ENCODE measurements at regions of chr17 and their contacts with region 1.

Region 1: DNA sequence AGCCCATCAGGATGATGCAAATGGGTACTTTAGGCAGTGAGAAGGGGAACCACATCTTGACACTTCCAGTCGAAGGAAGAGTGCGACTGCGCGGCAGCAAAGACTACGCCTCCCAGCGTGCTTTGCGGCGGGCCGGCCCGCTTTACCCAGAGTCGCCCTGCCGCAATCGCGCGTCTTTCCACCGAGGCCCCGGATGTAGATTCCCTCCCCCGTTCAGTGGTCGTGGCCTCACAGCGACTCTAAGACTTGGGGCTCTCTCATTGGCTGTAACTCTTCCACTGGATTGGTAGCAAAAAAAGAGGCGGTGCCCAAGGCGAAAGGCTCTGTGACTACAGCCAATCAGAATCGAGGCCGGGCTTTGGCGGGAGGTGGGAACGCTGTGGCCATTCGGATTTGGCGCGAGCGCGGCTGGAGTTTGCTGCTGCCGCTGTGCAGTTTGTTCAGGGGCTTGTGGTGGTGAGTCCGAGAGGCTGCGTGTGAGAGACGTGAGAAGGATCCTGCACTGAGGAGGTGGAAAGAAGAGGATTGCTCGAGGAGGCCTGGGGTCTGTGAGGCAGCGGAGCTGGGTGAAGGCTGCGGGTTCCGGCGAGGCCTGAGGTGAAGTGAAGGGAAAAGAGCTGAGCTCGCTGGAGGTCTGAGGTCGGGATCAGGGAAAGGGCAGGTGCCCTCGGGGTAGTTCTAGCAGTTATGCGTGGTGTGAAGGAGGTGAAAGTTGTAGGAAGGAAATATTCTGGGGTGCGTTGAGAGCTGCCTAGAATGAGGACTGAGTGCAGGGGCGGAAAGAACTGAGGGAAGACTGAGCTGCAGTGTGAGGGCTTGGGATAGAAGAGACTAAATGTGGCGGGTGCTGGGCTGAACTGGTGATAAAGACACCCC is at the start of gene CDC6:
- DNase-seq: peak; percentile 99
- H3K4me3 ChIP-seq: peak within 1 kb of the TSS; percentile 35 to 62 (median 50)
- H3K27ac ChIP-seq: peak within 1 kb of the TSS; percentile 44 to 60 (median 57)
- H3K4me1 ChIP-seq: peaks cover 5 to 45% (median 25%) of the 10 kb centered on the region in 4 donors
- H3K27me3 ChIP-seq: no peaks in the 10 kb centered on the region
- CTCF ChIP-seq: no peak
- EP300 ChIP-seq: no peak
- POLR2A ChIP-seq: peak; percentile 42
- total RNA-seq, gene CDC6: 1.6 to 3.2 (median 2.4) TPM in 3 of 4 donors, not detected in the other

Region 2: GRCh38 chr17:40021451-40021971 is 266.2 kb before region 1 on chr17:
- in situ Hi-C with region 1: loop called in 2 of 4 experiments (anchors 25 kb)
- intact Hi-C with region 1: no loop called
- DNase-seq: no peak
- H3K4me3 ChIP-seq: no peak overlapping the region
- H3K27ac ChIP-seq: peak overlapping the region in 3 of 4 donors; percentile 38 to 80 (median 67)
- H3K4me1 ChIP-seq: peaks cover 12 to 61% (median 52%) of the 10 kb centered on the region in 4 donors
- H3K27me3 ChIP-seq: no peaks in the 10 kb centered on the region
- CTCF ChIP-seq: no peak
- EP300 ChIP-seq: no peak
- POLR2A ChIP-seq: no peak

Region 3: DNA sequence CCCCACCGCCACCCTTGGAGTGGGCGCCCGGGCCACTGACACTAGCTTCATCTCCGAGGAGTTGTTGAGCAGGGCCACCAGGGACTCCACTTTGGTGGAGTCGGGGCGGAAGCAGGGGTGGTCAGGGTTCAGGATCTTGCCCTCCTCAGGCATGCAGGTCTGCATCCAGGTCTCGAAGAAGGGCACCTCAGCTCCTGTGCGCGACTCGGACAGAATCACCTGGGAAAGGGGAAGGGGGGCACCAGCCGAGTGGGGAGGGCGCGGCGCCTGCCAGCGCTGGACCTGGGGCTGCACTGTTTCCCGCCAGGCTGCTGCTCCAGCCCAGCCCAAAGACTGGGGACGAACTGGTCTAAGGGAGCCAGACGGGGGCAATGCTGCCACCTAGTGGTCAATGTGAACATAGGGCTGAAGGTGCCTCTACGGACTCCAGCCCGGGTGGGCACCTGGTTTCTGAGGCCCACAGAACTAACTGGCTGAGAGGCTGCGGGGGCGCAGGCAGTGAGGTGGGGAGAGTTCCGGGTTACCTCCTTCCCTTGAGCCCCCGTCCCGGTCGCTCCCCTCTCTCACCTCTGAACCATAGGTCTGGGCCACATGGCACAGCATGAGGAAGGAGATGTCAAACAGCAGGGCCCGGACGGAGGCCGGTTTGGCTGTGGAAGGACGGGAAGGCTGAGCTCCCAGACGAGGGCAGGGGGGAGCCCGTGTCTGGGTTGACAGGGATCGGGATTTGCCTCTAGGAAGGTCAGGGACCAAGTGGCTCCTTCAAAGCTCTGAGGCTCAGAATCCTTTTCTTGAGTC is 260.7 kb before region 1 on chr17:
- in situ Hi-C with region 1: loop called in 2 of 4 experiments (anchors 25 kb)
- intact Hi-C with region 1: no loop called
- DNase-seq: peak; percentile 88
- H3K4me3 ChIP-seq: no peak overlapping the region
- H3K27ac ChIP-seq: peak overlapping the region in 1 of 4 donors; percentile 80
- H3K4me1 ChIP-seq: peaks cover 10 to 51% (median 49%) of the 10 kb centered on the region in 4 donors
- H3K27me3 ChIP-seq: no peaks in the 10 kb centered on the region
- CTCF ChIP-seq: peak; percentile 92 to 96 (median 94)
- EP300 ChIP-seq: no peak
- POLR2A ChIP-seq: no peak

Region 4: DNA sequence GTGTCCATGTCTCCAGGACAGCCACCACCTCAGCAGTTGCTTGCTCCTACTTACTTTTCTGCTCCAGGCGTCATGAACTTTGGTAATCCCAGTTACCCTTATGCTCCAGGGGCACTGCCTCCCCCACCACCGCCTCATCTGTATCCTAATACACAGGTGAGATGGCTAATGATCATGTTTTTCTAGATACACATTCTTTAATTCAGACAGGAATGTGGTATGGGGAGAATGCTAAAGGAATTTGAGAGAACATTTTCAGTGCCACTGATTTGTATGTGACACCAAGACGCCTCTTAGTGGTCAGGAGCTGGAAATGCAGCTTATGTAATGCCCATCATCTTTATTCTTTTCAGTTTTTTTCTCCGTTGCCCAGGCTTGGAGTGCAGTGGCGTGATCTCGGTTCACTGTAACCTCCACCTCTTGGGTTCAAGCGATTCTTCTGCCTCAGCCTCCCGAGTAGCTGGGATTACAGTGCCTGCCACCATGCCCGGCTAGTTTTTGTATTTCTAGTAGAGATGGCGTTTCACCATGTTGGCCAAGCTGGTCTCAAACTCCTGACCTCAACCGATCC is 119.4 kb before region 1 on chr17:
- in situ Hi-C with region 1: no loop called
- intact Hi-C with region 1: no loop called
- DNase-seq: no peak
- H3K4me3 ChIP-seq: no peak overlapping the region
- H3K27ac ChIP-seq: peak overlapping the region; percentile 50 to 66 (median 56)
- H3K4me1 ChIP-seq: peaks cover 0 to 7% (median 3%) of the 10 kb centered on the region in 4 donors
- H3K27me3 ChIP-seq: no peaks in the 10 kb centered on the region
- CTCF ChIP-seq: peak; percentile 77 to 92 (median 80)
- EP300 ChIP-seq: no peak
- POLR2A ChIP-seq: no peak

Region 5: DNA sequence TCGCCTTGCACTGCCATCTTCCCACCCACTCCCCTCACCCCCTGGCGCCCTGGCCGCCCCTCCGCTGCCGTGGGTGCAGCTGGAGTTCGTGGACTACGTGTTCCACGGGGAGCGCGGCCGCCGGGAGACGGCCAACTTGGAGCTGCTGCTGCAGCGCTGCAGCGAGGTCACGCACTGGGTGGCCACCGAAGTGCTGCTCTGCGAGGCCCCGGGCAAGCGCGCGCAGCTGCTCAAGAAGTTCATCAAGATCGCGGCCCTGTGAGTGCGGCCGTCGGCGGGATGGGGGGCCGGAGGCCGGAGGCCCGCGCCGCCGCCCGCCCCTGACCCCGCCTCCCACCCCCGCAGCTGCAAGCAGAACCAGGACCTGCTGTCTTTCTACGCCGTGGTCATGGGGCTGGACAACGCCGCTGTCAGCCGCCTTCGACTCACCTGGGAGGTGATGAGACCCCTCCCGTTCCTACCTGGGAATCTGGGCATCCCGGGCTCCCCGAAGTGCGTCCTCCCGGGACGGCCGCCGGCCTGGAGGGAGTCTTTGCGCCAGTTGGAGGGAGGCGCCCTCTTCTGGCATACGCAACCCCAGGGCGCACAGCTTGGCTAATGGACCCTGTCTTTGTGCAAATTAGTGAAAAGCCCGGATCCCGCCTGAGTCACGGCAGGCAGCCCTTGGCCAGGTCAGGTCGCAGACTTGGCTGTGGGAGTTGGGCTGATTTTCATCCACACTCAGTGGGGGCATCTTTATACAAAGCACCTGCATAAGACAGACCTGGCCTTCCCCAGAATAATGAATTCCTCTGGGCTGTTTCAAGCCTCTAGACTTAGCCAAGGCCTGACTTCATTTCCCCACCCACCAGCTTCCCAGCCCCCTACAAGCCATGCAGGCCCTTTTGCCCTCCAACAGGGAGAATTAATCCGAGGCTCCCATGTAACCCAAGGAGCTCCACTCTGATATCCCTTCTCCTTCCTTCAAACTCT is 96.2 kb before region 1 on chr17:
- in situ Hi-C with region 1: loop called in 2 of 4 experiments (anchors 10 to 25 kb)
- intact Hi-C with region 1: no loop called
- DNase-seq: peak; percentile 77
- H3K4me3 ChIP-seq: peak overlapping the region; percentile 31 to 57 (median 38)
- H3K27ac ChIP-seq: peak overlapping the region; percentile 20 to 74 (median 44)
- H3K4me1 ChIP-seq: peaks cover 0 to 13% (median 7%) of the 10 kb centered on the region in 4 donors
- H3K27me3 ChIP-seq: no peaks in the 10 kb centered on the region
- CTCF ChIP-seq: peak in 4 of 5 experiments; percentile 31 to 52 (median 40)
- EP300 ChIP-seq: no peak
- POLR2A ChIP-seq: no peak

Region 6: DNA sequence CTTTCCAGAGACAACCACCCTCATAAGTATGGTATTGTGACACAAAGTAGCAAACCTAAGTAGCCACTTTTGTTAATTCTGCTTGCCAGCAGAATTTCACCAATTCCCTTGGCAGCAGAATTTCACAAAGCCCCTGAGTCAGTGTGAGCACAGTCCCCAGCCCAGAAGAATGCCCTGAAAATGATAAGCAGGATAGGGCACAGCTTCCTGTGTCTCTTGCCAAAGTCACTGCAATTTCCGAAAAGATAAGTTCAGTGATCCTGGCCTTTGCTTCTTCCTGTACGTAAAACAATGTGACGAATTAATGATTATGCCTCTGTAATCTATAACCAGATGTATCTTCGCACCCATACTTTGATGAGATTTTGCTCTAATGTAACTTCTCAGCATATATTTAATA is 84.6 kb before region 1 on chr17:
- in situ Hi-C with region 1: loop called (anchors 5 to 25 kb)
- intact Hi-C with region 1: no loop called
- DNase-seq: no peak
- H3K4me3 ChIP-seq: no peak overlapping the region
- H3K27ac ChIP-seq: no peak overlapping the region
- H3K4me1 ChIP-seq: peaks cover 0 to 23% (median 5%) of the 10 kb centered on the region in 4 donors
- H3K27me3 ChIP-seq: no peaks in the 10 kb centered on the region
- CTCF ChIP-seq: no peak
- EP300 ChIP-seq: no peak
- POLR2A ChIP-seq: no peak

Region 7: DNA sequence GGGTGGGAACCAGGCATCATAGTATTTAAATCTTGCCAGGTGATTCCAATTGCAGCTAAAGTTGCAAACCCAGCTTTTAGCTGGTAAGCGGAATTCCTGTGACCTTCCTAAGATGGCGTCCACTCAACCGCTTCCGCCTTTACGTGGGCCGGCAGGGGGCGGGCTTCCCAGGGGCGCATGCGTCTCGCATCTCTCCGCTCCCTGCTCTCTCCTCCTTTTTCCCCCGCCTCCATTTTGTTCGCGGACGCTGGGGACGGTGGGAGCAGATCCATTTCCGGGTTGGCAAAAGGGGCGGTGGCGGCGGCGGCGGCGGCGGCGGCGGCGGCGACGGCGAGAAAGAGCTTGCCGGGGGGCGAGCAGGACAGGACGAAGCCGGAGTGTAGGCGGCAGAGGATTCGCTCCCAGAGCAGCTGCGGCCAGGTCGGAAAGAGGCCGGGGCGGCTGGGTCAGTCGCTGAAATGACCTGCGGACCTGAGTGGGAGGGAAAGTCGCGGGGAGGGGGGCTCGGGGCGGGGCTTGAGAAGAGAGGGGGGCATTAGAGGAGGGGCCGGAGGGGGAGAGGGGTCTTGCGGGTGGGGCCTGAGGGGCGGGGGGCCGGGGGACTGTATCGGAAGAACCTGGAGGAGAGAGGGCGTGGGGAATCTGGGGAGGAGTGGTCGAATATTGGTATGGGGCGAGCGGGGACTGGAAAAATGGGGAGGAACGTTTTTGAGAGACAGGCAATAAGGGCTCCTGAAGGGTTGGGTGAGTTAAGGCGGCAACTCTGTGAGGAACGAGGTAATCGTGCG is 68.5 kb before region 1 on chr17 and contains the start of gene WIPF2:
- in situ Hi-C with region 1: no loop called
- intact Hi-C with region 1: loop called (anchors 5 kb)
- DNase-seq: peak; percentile 99
- H3K4me3 ChIP-seq: peak within 1 kb of the TSS; percentile 66 to 91 (median 84)
- H3K27ac ChIP-seq: peak within 1 kb of the TSS; percentile 89 to 96 (median 92)
- H3K4me1 ChIP-seq: peaks cover 5 to 14% (median 11%) of the 10 kb centered on the region in 4 donors
- H3K27me3 ChIP-seq: no peaks in the 10 kb centered on the region
- CTCF ChIP-seq: peak; percentile 76 to 92 (median 87)
- EP300 ChIP-seq: no peak
- POLR2A ChIP-seq: peak; percentile 85
- total RNA-seq, gene WIPF2: 20.5 to 29.5 (median 25.3) TPM

Region 8: GRCh38 chr17:40264458-40265185 is 23.1 kb before region 1 on chr17:
- in situ Hi-C with region 1: no loop called
- intact Hi-C with region 1: no loop called
- DNase-seq: no peak
- H3K4me3 ChIP-seq: no peak overlapping the region
- H3K27ac ChIP-seq: no peak overlapping the region
- H3K4me1 ChIP-seq: no peaks in the 10 kb centered on the region
- H3K27me3 ChIP-seq: no peaks in the 10 kb centered on the region
- CTCF ChIP-seq: no peak
- EP300 ChIP-seq: no peak
- POLR2A ChIP-seq: no peak

Region 9: DNA sequence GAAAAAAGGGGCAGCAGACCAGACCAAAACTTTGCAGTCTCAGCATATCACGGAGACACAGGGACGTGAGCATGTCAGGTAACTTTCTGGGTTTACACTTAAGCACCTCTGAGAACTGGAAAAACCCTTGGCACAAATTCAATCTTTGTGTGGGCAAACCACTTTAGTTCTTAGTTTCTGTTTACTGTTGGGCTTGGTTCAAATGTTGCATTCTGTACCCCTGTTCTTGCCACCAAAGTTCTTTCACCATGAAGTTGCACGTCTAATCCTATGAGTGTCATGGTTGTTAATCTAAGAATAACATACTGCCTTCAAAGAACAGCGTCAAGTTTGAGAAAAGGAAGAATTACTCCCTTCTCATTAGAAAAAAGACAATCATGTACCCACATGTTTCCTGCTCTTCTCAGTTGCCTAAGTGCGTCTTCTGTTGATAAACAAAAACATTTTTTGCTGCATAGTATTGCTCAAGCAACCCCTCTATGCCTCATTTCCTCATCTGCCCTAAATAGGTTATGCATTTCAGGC is 1051.3 kb after region 1 on chr17:
- in situ Hi-C with region 1: no loop called
- intact Hi-C with region 1: no loop called
- DNase-seq: no peak
- H3K4me3 ChIP-seq: no peak overlapping the region
- H3K27ac ChIP-seq: no peak overlapping the region
- H3K4me1 ChIP-seq: peaks cover 0 to 5% (median 0%) of the 10 kb centered on the region in 4 donors
- H3K27me3 ChIP-seq: no peaks in the 10 kb centered on the region
- CTCF ChIP-seq: no peak
- EP300 ChIP-seq: no peak
- POLR2A ChIP-seq: no peak